ENCODE measurements at regions of chr9 and their contacts with region 1.

Region 1: GRCh38 chr9:89999534-90000370 is 394.9 kb downstream of the GADD45G start:
- DNase-seq: peak; percentile 92
- H3K4me3 Mint-ChIP-seq: peak overlapping the region; percentile 76
- H3K27ac Mint-ChIP-seq: peak overlapping the region; percentile 86
- H3K4me1 Mint-ChIP-seq: peaks cover 32% of the 10 kb centered on the region
- H3K27me3 Mint-ChIP-seq: no peaks in the 10 kb centered on the region

Region 2: GRCh38 chr9:90102292-90102901 is 102.6 kb after region 1 on chr9:
- intact Hi-C with region 1: loop called (anchors 5 kb)
- DNase-seq: peak; percentile 94
- H3K4me3 Mint-ChIP-seq: no peak overlapping the region
- H3K27ac Mint-ChIP-seq: peak overlapping the region; percentile 39
- H3K4me1 Mint-ChIP-seq: peaks cover 14% of the 10 kb centered on the region
- H3K27me3 Mint-ChIP-seq: peaks cover 11% of the 10 kb centered on the region